ENCODE measurements at regions of chr2 and their contacts with region 1.

Region 1: DNA sequence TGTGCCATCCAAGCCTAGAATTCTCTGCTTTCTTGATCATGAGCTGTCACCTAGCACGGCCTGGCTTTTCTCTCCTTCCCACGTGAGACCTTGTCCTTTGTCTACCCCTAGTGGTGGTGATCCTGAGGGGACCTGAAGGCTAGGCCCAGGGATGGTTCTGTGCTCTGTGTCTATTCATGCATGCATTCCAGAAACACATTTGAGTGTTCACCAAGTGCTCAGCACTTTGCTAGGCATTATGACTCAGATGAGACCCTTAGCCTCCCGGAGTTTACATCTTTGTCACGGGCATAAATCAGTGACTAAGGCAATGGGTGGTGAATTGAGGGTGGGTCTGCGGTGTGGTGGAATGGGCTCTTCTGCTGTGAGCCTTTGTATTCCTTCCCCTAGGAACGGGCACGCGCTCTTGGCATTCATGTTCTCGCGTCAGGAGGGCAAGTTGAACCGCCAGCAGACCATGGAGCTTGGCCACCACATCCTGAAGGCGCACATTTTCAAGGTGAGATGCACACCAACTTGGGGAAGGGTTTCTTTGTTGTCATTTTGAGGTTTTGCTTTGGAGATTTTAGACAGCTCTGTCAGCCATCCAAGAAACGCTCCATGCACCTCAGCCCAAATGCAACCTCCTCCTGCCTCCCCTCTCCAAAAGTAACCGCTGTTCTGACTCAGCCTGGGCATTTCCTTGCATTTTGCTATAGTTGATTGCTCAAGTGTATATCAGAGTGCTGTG is 100.9 kb downstream of the WDSUB1 start:
- DNase-seq: peak; percentile 60 to 82 (median 80)
- H3K4me3 ChIP-seq: no peak overlapping the region
- H3K27ac ChIP-seq: no peak overlapping the region
- H3K4me1 ChIP-seq: no peaks in the 10 kb centered on the region
- H3K27me3 ChIP-seq: no peaks in the 10 kb centered on the region

Region 2: DNA sequence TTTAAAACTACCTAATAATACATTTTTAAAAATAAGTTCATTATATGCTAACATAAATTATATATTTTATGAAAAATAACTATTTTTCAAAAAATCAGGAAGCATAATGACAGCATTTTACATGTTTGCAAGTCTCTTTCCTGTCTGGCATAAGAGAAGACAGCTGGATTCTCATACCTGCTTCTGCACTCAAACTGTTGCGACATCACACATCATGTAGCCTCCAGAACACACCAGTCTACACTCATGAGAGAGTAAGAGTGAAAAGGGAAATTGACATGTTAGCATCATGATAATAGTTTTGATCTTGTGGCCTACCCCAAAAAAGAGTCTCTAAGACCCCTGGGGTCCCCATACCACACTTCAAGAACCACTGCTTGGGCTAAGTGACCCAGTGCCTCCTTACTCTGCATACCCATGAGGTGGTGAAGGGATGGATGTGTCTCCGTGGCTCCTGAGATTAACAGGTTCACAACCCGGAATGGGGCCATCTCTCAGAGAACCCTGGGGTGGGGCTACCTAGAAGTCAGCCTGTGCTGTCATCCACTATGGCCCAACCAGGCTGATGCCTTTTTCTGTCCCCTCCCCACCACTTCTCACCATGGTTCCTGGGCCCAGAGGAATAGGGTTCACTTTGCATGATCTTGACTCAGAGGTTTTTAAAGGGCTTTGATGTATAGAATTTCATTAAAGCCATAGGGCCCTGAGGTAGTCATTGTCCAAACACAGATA is 493.0 kb before region 1 on chr2:
- CTCF ChIA-PET with region 1: no interaction called
- POLR2A ChIA-PET with region 1: no interaction called
- DNase-seq: peak in 2 of 3 donors; percentile 8 to 23
- H3K4me3 ChIP-seq: no peak overlapping the region
- H3K27ac ChIP-seq: no peak overlapping the region
- H3K4me1 ChIP-seq: peaks cover 0 to 1% (median 0%) of the 10 kb centered on the region in 4 experiments
- H3K27me3 ChIP-seq: peaks cover 0 to 2% (median 0%) of the 10 kb centered on the region in 5 experiments

Region 3: DNA sequence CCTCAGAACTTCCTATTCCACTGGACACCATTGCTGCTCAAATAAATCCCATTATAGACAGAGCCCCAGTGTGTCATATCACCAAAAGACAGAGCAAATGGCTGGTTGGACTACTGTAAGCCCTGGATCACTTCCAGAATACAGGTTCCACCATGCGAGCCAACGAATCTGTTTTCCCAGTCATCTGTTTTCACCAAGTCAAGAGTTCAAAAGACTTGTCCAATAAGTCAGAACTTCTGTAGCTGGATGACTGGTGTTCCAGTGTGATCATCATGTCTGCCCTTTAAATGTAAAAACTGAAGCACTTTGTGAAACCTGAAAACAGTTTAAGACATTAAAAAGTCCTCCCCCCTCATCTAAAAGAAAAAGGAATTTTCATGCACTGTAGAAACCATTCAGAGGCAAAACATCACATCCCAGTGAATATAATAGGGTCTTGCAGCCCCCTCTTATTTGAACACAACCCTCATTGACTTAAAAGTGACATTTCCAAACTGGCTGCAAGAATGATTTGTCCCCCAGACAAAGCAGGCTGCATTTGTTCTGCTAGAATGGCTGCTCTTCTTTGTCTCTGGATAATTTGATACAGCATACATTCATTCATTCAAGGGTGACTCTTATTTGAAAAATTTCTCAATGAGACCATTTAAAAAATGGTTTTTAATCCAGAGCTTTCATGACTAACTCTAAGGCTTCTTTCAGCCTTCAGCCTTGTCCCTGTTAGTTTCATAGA is 281.7 kb before region 1 on chr2:
- CTCF ChIA-PET with region 1: interaction called, 17 read pairs
- POLR2A ChIA-PET with region 1: no interaction called
- DNase-seq: no peak
- H3K4me3 ChIP-seq: no peak overlapping the region
- H3K27ac ChIP-seq: no peak overlapping the region
- H3K4me1 ChIP-seq: no peaks in the 10 kb centered on the region
- H3K27me3 ChIP-seq: no peaks in the 10 kb centered on the region